ENCODE measurements at regions of chr1 and their contacts with region 1.

Region 1: GRCh38 chr1:26321315-26322041 is 3.7 kb downstream of the CD52 start:
- DNase-seq: peak; percentile 86 to 95 (median 92)
- H3K4me3 ChIP-seq: peak overlapping the region in 15 of 59 donors; percentile 3 to 44 (median 22)
- H3K27ac ChIP-seq: peak overlapping the region in 4 of 59 donors; percentile 3 to 36 (median 12)
- H3K27me3 ChIP-seq: peaks cover 0 to 4% (median 0%) of the 10 kb centered on the region in 45 donors
- CTCF ChIP-seq: peak; percentile 65 to 97 (median 90)

Region 2: DNA sequence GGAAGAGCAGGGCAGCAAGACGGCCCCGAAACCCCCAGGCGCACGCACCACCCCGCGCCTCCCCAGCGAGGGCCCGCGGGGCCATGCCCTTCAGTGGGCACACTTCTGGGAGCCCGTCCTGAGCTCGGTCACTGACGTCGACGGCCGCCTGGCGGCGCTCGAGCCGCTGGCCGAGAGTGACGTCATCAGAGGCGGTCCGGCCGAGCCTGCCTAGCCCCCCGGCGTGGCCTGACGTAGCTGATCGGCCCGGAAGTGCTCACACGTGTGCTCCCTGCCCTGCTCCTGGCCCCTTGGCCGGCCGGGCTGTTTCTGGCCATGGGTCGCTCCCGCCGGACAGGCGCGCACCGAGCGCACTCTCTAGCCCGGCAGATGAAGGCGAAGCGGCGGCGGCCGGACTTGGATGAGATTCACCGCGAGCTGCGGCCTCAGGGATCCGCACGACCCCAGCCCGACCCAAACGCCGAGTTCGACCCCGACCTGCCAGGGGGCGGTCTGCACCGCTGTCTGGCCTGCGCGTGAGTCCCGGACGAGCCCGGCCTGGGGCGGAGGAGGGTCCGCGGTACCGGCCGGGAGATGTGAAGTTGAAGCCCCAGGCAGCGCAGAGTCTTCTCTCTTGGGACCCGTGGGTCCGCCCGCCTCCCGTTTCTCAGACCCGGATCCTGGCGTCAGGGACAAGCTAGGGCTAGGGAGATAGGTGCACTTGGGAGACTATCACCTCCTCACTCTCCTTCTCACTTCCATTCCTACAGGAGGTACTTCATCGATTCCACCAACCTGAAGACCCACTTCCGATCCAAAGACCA is 151.6 kb before region 1 on chr1 and contains the start of gene ZNF593:
- intact Hi-C with region 1: loop called (anchors 2 to 5 kb)
- DNase-seq: peak; percentile 87 to 97 (median 93)
- H3K4me3 ChIP-seq: peak within 1 kb of the TSS; percentile 50 to 99 (median 91)
- H3K27ac ChIP-seq: peak within 1 kb of the TSS in 55 of 59 donors; percentile 2 to 87 (median 65)
- H3K27me3 ChIP-seq: no peaks in the 10 kb centered on the region
- CTCF ChIP-seq: peak; percentile 77 to 99 (median 95)
- total RNA-seq, gene ZNF593: 10.6 to 30.1 (median 17.6) TPM

Region 3: DNA sequence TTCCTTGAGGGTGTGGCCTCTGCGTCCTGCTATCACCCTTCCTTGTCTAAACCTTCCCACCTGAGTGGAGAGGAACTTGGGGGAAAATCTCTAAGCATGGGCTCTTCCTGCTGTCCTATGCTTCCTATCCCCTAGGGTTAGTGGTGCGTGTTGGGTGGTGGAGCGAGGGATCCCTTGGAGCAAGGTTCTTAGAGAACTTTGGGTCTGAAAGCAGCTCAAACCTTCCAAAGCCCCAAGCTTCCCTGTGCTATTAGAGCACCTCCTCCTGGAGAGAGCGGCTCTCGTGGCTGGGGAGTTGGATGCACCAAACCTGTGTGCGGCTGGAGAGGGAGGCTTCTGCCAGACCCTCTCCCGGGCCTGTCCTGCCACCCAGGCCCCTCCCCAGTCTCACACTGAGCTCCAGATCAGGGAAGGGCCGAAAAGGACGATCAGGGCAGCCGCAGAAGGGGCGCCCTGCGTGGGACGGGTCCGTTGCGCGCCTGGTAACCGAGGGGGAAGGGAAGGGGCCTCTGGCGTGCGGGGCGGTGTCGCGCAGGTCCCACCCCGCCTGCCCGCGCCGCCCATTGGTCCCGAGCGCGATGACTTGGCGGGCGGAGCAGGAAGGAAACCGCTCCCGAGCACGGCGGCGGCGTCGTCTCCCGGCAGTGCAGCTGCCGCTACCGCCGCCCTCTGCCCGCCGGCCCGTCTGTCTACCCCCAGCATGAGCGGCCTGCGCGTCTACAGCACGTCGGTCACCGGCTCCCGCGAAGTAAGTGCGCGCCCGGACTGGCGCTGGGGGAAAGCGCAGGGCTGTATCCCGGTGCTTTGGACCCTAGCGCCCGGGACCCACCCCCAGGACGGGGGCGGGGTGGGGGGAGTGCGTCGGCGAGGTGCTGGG is 41.8 kb before region 1 on chr1 and contains the start of gene SH3BGRL3:
- intact Hi-C with region 1: loop called (anchors 2 kb)
- DNase-seq: peak; percentile 69 to 93 (median 84)
- H3K4me3 ChIP-seq: peak within 1 kb of the TSS; percentile 58 to 97 (median 89)
- H3K27ac ChIP-seq: peak within 1 kb of the TSS; percentile 58 to 98 (median 93)
- H3K27me3 ChIP-seq: no peaks in the 10 kb centered on the region
- CTCF ChIP-seq: peak in 49 of 56 donors; percentile 14 to 66 (median 37)
- total RNA-seq, gene SH3BGRL3: 50.9 to 144 (median 80.6) TPM

Region 4: GRCh38 chr1:26284597-26285360 is 36.7 kb before region 1 on chr1:
- intact Hi-C with region 1: loop called (anchors 2 kb)
- DNase-seq: peak in 5 of 10 donors; percentile 46 to 87 (median 71)
- H3K4me3 ChIP-seq: no peak overlapping the region
- H3K27ac ChIP-seq: peak overlapping the region in 27 of 59 donors; percentile 3 to 65 (median 27)
- H3K27me3 ChIP-seq: no peaks in the 10 kb centered on the region
- CTCF ChIP-seq: peak; percentile 18 to 82 (median 67)

Region 5: DNA sequence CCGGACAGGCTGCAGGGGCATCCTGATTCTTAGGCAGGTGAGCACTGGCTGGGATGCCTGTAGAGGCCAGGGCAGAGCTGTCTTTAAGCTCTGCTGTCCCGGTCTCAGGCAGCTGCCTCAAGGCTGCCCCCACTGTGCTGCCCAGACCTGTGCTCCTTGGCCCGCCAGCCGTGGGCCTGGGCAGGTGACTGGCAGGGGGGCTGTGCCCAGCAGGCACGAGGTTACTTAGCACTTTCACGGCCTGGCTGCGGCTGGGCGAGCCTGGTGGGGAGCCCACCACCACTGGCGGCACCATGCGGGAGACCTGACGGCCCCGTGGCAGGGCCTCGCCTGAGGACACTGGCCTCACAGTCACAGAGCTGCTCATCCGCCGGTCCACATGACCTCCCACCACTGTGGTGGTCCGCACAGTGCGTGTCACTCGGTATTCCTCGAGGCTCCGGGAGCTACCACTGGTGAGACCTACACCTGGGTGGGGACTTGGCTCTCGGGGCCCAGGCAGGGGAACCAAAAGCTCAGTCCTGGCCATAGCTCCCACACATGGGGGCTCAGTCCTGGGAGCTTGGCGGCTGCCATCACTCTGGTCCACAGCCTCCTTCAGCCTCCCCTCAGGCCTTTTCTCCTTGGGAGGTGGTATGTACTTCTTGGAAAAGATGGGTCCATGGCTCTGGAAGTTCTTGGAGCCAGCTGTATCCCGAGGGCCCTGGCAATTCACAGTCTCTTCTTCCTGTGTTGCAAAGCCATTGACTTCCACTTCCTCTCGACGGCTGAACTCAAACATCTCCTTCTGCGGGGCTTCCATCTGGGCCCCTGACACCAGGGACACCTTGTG is 24.5 kb after region 1 on chr1:
- intact Hi-C with region 1: no loop called
- DNase-seq: no peak
- H3K4me3 ChIP-seq: no peak overlapping the region
- H3K27ac ChIP-seq: no peak overlapping the region
- H3K27me3 ChIP-seq: no peaks in the 10 kb centered on the region
- CTCF ChIP-seq: no peak

Measured in dorsolateral prefrontal cortex (tissue), 120 donors.